ENCODE measurements at regions of chr6 and their contacts with region 1.

Region 1: DNA sequence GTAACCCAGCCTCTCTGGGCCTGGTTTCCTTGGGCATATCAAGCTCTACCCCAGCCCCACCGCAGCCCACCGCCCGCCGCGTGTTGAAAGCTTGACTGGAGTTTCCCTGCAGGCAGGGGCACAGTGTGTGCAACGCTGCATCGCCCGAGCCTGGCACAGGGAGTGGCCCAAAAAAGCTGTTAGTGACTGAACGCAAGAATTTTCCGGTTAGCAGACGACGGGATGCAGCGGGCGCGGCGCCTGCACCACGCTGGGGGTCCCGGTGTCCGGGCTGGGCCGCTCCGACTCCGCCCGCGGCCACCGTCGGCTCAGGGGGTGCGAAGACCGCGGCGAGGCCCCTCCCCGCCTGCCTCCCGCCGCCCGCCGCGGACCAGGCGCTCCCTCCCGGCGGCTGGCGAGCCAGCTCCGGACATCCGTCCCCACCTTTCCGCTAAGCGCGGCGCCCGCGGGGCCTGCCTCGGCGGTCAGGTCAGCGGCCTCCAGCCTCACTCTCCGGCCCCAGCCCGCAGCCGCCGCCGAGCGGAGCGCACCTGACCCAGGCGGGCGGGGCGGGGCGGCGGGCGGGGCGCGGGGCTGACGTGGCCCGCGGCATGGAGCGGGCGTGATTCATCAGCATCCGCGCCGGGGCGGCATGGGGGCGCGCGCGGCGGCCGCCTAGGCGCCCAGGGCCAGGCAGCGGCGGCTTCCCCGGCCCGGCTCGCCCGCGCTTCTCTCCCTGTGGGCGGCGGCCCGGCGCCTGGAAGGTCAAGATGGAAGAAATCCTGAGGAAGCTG is at the start of gene ARFGEF3:
- DNase-seq: peak; percentile 62
- ATAC-seq: peak; percentile 86
- H3K4me3 ChIP-seq: peak within 1 kb of the TSS; percentile 97
- H3K27ac ChIP-seq: 0 out of 2 replicates have a peak within 1 kb of the TSS, but pooled peaks have one; percentile 11
- H3K4me1 ChIP-seq: peaks cover 18% of the 10 kb centered on the region
- H3K27me3 ChIP-seq: peaks cover 19% of the 10 kb centered on the region; the same call in 1 of the 2 replicates
- CTCF ChIP-seq: no peak
- total RNA-seq, gene ARFGEF3: 7.8 and 8.8 TPM in 2 replicates

Region 2: GRCh38 chr6:138231381-138231897 is 69.9 kb after region 1 on chr6:
- CTCF ChIA-PET with region 1: interaction called, 4 read pairs
- POLR2A ChIA-PET with region 1: no interaction called
- intact Hi-C with region 1: loop called (anchors 1 kb)
- DNase-seq: peak; percentile 76
- ATAC-seq: peak; percentile 93
- H3K4me3 ChIP-seq: peak overlapping the region; percentile 48
- H3K27ac ChIP-seq: peak overlapping the region; percentile 97
- H3K4me1 ChIP-seq: peaks cover 67% of the 10 kb centered on the region
- H3K27me3 ChIP-seq: no peaks in the 10 kb centered on the region
- CTCF ChIP-seq: no peak

Region 3: GRCh38 chr6:138403801-138404661 is 242.5 kb after region 1 on chr6 and contains the start of gene HEBP2:
- CTCF ChIA-PET with region 1: no interaction called
- POLR2A ChIA-PET with region 1: no interaction called
- intact Hi-C with region 1: loop called (anchors 5 kb)
- DNase-seq: peak; percentile 89
- ATAC-seq: peak; percentile 85
- H3K4me3 ChIP-seq: peak within 1 kb of the TSS; percentile 95
- H3K27ac ChIP-seq: peak within 1 kb of the TSS; percentile 45
- H3K4me1 ChIP-seq: peaks cover 20% of the 10 kb centered on the region; the same call in 1 of the 2 replicates
- H3K27me3 ChIP-seq: no peaks in the 10 kb centered on the region
- CTCF ChIP-seq: peak; percentile 47; the same call in 1 of the 2 replicates
- total RNA-seq, gene HEBP2: 58.9 and 74.6 TPM in 2 replicates

Region 4: GRCh38 chr6:138493413-138493812 is 331.9 kb after region 1 on chr6:
- CTCF ChIA-PET with region 1: no interaction called
- POLR2A ChIA-PET with region 1: no interaction called
- intact Hi-C with region 1: no loop called
- DNase-seq: no peak
- ATAC-seq: no peak
- H3K4me3 ChIP-seq: no peak overlapping the region
- H3K27ac ChIP-seq: no peak overlapping the region
- H3K4me1 ChIP-seq: no peaks in the 10 kb centered on the region
- H3K27me3 ChIP-seq: no peaks in the 10 kb centered on the region
- CTCF ChIP-seq: no peak

Measured in PC-3 (cell line).